K562 (cell line): ENCODE measurements at regions of chr4 and their contacts with region 1.

Region 1: GRCh38 chr4:26860157-26860921 is at the start of gene STIM2:
- DNase-seq: peak; percentile 92 to 98 (median 94)
- ATAC-seq: peak; percentile 84
- H3K4me3 ChIP-seq: peak within 1 kb of the TSS; percentile 73
- H3K27ac ChIP-seq: peak within 1 kb of the TSS; percentile 65
- H3K4me1 ChIP-seq: peaks cover 12 to 16% of the 10 kb centered on the region in 2 experiments; a peak in 3 of 5 replicates
- H3K27me3 ChIP-seq: no peaks in the 10 kb centered on the region
- CTCF ChIP-seq: peak; percentile 63 to 68 (median 68)
- EP300 ChIP-seq: 0 out of 2 replicates have a peak, but pooled peaks have one; percentile 6
- POLR2A ChIP-seq: peak; percentile 80
- RAD21 ChIP-seq: peak; percentile 46 to 60
- polyA plus RNA-seq, gene STIM2: 7.2 to 12.6 TPM

Region 2: GRCh38 chr4:25670991-25671390 is 1189.3 kb before region 1 on chr4:
- CTCF ChIA-PET with region 1: no interaction called
- POLR2A ChIA-PET with region 1: no interaction called
- in situ Hi-C with region 1: no loop called
- intact Hi-C with region 1: no loop called
- DNase-seq: no peak
- ATAC-seq: no peak
- H3K4me3 ChIP-seq: no peak overlapping the region
- H3K27ac ChIP-seq: no peak overlapping the region
- H3K4me1 ChIP-seq: no peaks in the 10 kb centered on the region
- H3K27me3 ChIP-seq: peaks cover 3 to 38% of the 10 kb centered on the region in 2 experiments; a peak in 4 of 5 replicates
- CTCF ChIP-seq: no peak
- EP300 ChIP-seq: no peak
- POLR2A ChIP-seq: no peak
- RAD21 ChIP-seq: no peak

Region 3: GRCh38 chr4:26583865-26584652 is 276.3 kb before region 1 on chr4 and contains the start of gene TBC1D19:
- CTCF ChIA-PET with region 1: no interaction called
- POLR2A ChIA-PET with region 1: interaction called, 4 read pairs
- in situ Hi-C with region 1: no loop called
- intact Hi-C with region 1: loop called (anchors 5 kb)
- DNase-seq: peak; percentile 73 to 90 (median 82)
- ATAC-seq: peak; percentile 100
- H3K4me3 ChIP-seq: peak within 1 kb of the TSS; percentile 73
- H3K27ac ChIP-seq: peak within 1 kb of the TSS; percentile 58
- H3K4me1 ChIP-seq: peaks cover 3 to 4% of the 10 kb centered on the region in 2 experiments; a peak in 4 of 5 replicates
- H3K27me3 ChIP-seq: no peaks in the 10 kb centered on the region
- CTCF ChIP-seq: peak in 1 of 3 experiments; percentile 19; a peak in 1 of 6 replicates
- EP300 ChIP-seq: peak; percentile 64
- POLR2A ChIP-seq: peak; percentile 60
- RAD21 ChIP-seq: no peak
- polyA plus RNA-seq, gene TBC1D19: 0.73 to 1.1 TPM

Region 4: GRCh38 chr4:26619784-26620183 is 240.6 kb before region 1 on chr4:
- CTCF ChIA-PET with region 1: no interaction called
- POLR2A ChIA-PET with region 1: no interaction called
- in situ Hi-C with region 1: no loop called
- intact Hi-C with region 1: no loop called
- DNase-seq: no peak
- ATAC-seq: no peak
- H3K4me3 ChIP-seq: no peak overlapping the region
- H3K27ac ChIP-seq: no peak overlapping the region
- H3K4me1 ChIP-seq: peaks cover 5 to 16% of the 10 kb centered on the region in 2 experiments; a peak in 4 of 5 replicates
- H3K27me3 ChIP-seq: no peaks in the 10 kb centered on the region
- CTCF ChIP-seq: no peak
- EP300 ChIP-seq: no peak
- POLR2A ChIP-seq: no peak
- RAD21 ChIP-seq: no peak

Region 5: DNA sequence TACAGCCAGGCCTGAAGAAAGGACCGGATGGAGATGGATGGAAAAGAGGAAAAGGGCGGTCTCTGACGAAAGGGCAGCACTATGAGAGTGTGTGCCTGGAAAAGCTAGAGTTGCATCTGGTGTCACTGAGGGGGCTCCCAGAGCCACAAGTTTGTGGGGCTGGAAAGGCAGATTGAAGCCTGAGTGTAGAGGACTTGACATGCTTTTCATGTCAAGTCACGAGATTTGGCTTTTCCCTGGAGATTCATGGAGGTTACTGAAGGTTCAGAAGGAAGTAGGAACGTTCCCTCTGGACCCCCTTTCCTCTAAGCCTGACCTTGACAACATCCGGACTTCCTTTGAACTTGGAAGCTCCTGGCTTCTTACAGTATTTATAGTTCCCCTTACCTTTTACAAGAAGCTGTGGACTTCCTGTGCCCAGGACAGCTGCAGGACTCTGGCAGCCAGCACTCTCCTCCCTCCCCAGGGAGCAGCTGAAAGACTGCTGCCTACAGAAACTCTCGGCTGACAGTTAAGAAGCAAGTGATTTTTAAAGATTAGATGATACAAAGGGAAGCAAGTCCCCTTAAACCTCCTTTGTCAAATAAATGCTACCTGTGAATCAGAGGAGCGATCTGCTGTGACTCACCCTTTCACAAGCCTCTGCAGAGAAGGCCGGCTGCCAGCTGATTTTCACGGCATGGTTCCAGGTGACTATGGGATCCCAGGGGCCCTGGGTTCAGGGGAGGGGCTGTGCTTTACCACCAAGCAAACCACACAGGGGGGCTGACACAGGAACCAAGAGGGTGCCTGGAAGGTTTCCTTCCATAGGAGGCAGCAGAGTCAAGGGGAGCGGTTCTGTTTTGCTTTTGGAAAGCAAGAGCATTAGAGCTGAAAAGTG is 72.6 kb before region 1 on chr4:
- CTCF ChIA-PET with region 1: no interaction called
- POLR2A ChIA-PET with region 1: no interaction called
- in situ Hi-C with region 1: no loop called
- intact Hi-C with region 1: loop called (anchors 2 kb)
- DNase-seq: peak; percentile 26 to 65 (median 42)
- ATAC-seq: peak; percentile 74
- H3K4me3 ChIP-seq: no peak overlapping the region
- H3K27ac ChIP-seq: peak overlapping the region; percentile 21; the same call in 1 of the 3 replicates
- H3K4me1 ChIP-seq: peaks cover 11 to 40% of the 10 kb centered on the region in 2 experiments; a peak in 4 of 5 replicates
- H3K27me3 ChIP-seq: no peaks in the 10 kb centered on the region
- CTCF ChIP-seq: peak; percentile 37 to 52 (median 47)
- EP300 ChIP-seq: peak; percentile 41; the same call in 1 of the 2 replicates
- POLR2A ChIP-seq: no peak
- RAD21 ChIP-seq: peak; percentile 37 to 44; a peak in 3 of 4 replicates

Region 6: GRCh38 chr4:26936284-26937065 is 76.1 kb after region 1 on chr4:
- CTCF ChIA-PET with region 1: no interaction called
- POLR2A ChIA-PET with region 1: interaction called, 3 read pairs
- in situ Hi-C with region 1: no loop called
- intact Hi-C with region 1: loop called (anchors 2 kb)
- DNase-seq: peak; percentile 24 to 87 (median 28)
- ATAC-seq: peak; percentile 92
- H3K4me3 ChIP-seq: no peak overlapping the region
- H3K27ac ChIP-seq: peak overlapping the region; percentile 11; the same call in 1 of the 3 replicates
- H3K4me1 ChIP-seq: peaks cover 12 to 33% of the 10 kb centered on the region in 2 experiments
- H3K27me3 ChIP-seq: no peaks in the 10 kb centered on the region
- CTCF ChIP-seq: no peak
- EP300 ChIP-seq: no peak; the same call in 1 of the 2 replicates
- POLR2A ChIP-seq: no peak
- RAD21 ChIP-seq: no peak

Region 7: DNA sequence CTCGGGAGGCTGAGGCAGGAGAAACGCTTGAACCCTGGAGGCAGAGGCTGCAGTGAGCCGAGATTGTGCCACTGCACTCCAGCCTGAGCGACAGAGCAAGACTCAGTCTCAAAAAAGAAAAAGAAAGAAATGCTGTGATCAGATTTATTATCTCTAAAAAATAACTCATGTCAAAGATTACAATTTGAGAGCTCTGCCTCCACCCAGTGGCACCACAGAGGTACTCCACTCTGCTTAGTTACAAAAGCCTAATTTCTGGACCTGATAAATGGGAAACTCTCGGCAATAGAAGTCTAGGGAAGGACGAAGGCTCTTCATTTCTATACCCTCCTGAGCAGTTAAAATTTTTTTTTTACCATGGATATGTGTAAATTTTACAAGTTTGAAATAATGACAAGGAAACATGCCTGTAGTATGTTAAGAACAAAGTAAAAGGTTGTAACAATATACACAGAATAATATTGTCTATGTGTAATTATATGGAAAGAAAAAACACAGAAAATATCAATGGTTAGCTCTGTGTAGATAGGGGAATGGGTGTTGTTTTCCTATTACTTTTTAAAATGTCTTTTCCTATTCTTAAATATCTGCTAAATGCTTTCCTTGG is 150.1 kb after region 1 on chr4:
- CTCF ChIA-PET with region 1: no interaction called
- POLR2A ChIA-PET with region 1: interaction called, 3 read pairs
- in situ Hi-C with region 1: no loop called
- intact Hi-C with region 1: loop called (anchors 2 kb)
- DNase-seq: peak; percentile 29 to 64 (median 44)
- ATAC-seq: peak; percentile 88
- H3K4me3 ChIP-seq: no peak overlapping the region
- H3K27ac ChIP-seq: no peak overlapping the region
- H3K4me1 ChIP-seq: no peaks in the 10 kb centered on the region
- H3K27me3 ChIP-seq: no peaks in the 10 kb centered on the region
- CTCF ChIP-seq: peak; percentile 62 to 82 (median 75)
- EP300 ChIP-seq: no peak
- POLR2A ChIP-seq: no peak
- RAD21 ChIP-seq: peak; percentile 85 to 87